ENCODE measurements at regions of chr1 and their contacts with region 1.

Region 1: GRCh38 chr1:165697881-165698760 is at the start of gene ALDH9A1:
- DNase-seq: peak; percentile 91
- ATAC-seq: peak; percentile 91
- H3K4me3 Mint-ChIP-seq: peak within 1 kb of the TSS; percentile 83
- H3K27ac Mint-ChIP-seq: peak within 1 kb of the TSS; percentile 93
- H3K4me1 Mint-ChIP-seq: peaks cover 19% of the 10 kb centered on the region
- H3K27me3 Mint-ChIP-seq: peaks cover 2% of the 10 kb centered on the region
- CTCF ChIP-seq: no peak
- total RNA-seq, gene ALDH9A1: 25.6 to 28.2 TPM

Region 2: DNA sequence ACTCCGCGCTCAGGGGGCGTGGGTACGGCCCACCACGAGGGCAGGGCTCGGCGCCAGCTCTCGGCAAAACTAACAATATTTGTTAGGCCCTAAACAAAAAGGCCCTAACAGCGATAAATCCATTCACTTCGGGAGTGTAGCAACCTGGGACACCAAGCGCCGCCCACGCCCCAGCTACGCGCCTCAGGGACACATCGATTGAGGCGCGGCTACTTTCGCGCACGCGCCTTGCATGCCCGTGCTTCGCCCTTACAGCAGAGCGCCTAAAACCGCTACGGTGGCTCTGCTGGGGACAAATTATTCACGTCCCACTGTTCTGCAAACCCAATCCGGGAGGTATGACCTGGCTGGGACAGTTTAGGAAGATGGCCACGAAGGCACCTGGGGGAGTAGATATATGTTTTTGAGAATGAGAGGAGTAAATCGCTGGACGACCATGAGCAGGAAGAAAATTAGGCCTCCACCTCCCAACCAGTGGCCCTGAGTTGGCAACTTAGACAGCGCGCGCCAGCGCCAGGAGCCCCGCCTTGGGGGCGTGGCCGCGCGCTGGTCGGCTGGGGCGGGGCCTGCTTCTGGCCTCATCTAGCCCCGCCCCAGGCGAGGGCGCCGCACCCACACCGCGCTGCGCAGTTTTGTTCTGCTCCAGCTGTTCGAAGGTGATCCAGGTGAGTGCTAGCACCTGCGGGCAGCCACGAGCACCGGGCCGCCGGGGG is 67.3 kb before region 1 on chr1 and contains the start of gene MGST3:
- CTCF ChIA-PET with region 1: no interaction called
- POLR2A ChIA-PET with region 1: no interaction called
- intact Hi-C with region 1: loop called (anchors 2 kb)
- DNase-seq: peak; percentile 98
- ATAC-seq: peak; percentile 94
- H3K4me3 Mint-ChIP-seq: no peak within 1 kb of the TSS
- H3K27ac Mint-ChIP-seq: no peak within 1 kb of the TSS
- H3K4me1 Mint-ChIP-seq: peaks cover 22% of the 10 kb centered on the region
- H3K27me3 Mint-ChIP-seq: no peaks in the 10 kb centered on the region
- CTCF ChIP-seq: no peak
- total RNA-seq, gene MGST3: 23.8 to 26.1 TPM

Measured in activated CD8-positive, alpha-beta T cell treated with anti-CD3 and anti-CD28 coated beads for 36 hours (primary cell).